Heart left ventricle (tissue), 16 donors: ENCODE measurements at regions of chr11 and their contacts with region 1.

Region 1: GRCh38 chr11:68066742-68067141 is 27.9 kb downstream of the TCIRG1 start:
- DNase-seq: no peak
- ATAC-seq: peak; percentile 20 to 76 (median 60)
- H3K4me3 ChIP-seq: no peak overlapping the region
- H3K27ac ChIP-seq: no peak overlapping the region
- H3K4me1 ChIP-seq: peaks cover 0 to 14% (median 0%) of the 10 kb centered on the region in 12 donors
- H3K27me3 ChIP-seq: no peaks in the 10 kb centered on the region
- CTCF ChIP-seq: no peak
- POLR2A ChIP-seq: no peak

Region 2: GRCh38 chr11:68030318-68031138 is 36.2 kb before region 1 on chr11 and contains the start of gene NDUFS8:
- intact Hi-C with region 1: no loop called
- DNase-seq: peak; percentile 95 to 98 (median 97)
- ATAC-seq: peak; percentile 90 to 96 (median 94)
- H3K4me3 ChIP-seq: peak within 1 kb of the TSS; percentile 63 to 94 (median 85)
- H3K27ac ChIP-seq: peak within 1 kb of the TSS; percentile 85 to 98 (median 93)
- H3K4me1 ChIP-seq: peaks cover 0 to 46% (median 30%) of the 10 kb centered on the region in 12 donors
- H3K27me3 ChIP-seq: no peaks in the 10 kb centered on the region
- CTCF ChIP-seq: no peak
- POLR2A ChIP-seq: peak in 1 of 2 donors; percentile 71
- total RNA-seq, gene NDUFS8: 262 to 948 (median 365) TPM

Region 3: DNA sequence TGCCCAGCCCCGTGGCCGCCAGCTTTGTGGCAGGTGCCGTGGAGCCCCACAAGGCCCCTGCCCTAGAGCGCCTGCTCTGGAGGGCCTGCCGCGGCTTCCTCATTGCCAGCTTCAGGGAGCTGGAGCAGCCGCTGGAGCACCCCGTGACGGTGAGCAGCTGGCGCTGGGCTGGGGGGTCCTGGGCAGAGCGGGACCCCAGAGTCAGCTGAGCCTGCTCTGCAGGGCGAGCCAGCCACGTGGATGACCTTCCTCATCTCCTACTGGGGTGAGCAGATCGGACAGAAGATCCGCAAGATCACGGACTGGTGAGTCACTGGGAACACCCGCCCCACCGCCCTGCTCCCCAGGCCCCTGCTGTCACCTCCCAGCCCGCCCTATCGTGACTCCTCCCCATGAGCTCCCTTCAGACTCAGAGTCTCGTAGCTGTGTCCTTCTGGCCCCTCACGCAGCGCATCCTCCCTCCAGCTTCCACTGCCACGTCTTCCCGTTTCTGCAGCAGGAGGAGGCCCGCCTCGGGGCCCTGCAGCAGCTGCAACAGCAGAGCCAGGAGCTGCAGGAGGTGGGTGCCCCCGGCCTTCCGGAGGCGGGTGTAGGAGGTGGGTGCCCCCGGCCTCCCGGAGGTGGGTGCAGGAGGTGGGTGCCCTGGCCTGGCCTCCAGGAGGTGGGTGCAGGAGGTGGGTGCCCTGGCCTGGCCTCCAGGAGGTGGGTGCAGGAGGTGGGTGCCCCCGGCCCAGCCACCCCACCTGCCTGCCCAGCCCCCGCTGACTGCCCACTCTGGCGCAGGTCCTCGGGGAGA is 23.2 kb before region 1 on chr11:
- intact Hi-C with region 1: no loop called
- DNase-seq: peak in 1 of 5 donors; percentile 54
- ATAC-seq: no peak
- H3K4me3 ChIP-seq: no peak overlapping the region
- H3K27ac ChIP-seq: peak overlapping the region in 1 of 12 donors; percentile 38
- H3K4me1 ChIP-seq: peaks cover under 1 to 24% (median 12%) of the 10 kb centered on the region in 12 donors
- H3K27me3 ChIP-seq: no peaks in the 10 kb centered on the region
- CTCF ChIP-seq: no peak
- POLR2A ChIP-seq: no peak

Region 4: GRCh38 chr11:68173926-68174325 is 107.2 kb after region 1 on chr11:
- intact Hi-C with region 1: loop called in 1 of 10 experiments (anchors 10 kb)
- DNase-seq: no peak
- ATAC-seq: no peak
- H3K4me3 ChIP-seq: no peak overlapping the region
- H3K27ac ChIP-seq: no peak overlapping the region
- H3K4me1 ChIP-seq: no peaks in the 10 kb centered on the region
- H3K27me3 ChIP-seq: no peaks in the 10 kb centered on the region
- CTCF ChIP-seq: no peak
- POLR2A ChIP-seq: no peak

Region 5: DNA sequence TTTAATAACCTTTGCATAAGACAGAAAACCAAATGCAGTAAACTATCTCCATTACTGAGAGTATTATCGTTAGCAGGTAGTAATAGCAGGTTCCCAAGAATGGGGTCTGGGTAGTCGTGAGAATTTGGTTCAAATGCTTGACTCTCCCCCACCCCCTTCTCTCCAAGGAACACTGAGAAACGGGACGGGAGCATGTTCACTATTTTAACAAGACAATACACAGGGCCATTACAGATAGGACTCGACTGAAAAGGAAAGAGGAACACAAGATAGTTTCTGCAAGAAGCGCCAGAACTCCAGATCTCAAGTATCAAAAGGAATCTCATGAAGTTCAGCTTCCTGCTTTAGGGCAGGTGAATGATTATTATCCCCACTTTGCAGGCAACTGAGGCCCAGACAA is 119.3 kb after region 1 on chr11:
- intact Hi-C with region 1: no loop called
- DNase-seq: no peak
- ATAC-seq: no peak
- H3K4me3 ChIP-seq: no peak overlapping the region
- H3K27ac ChIP-seq: no peak overlapping the region
- H3K4me1 ChIP-seq: peaks cover 0 to 18% (median 7%) of the 10 kb centered on the region in 12 donors
- H3K27me3 ChIP-seq: no peaks in the 10 kb centered on the region
- CTCF ChIP-seq: no peak
- POLR2A ChIP-seq: no peak